ENCODE measurements at regions of chr5 and their contacts with region 1.

Region 1: GRCh38 chr5:128498844-128499455 is 39.1 kb downstream of the FBN2 start:
- DNase-seq: no peak
- ATAC-seq: no peak
- H3K4me3 ChIP-seq: no peak overlapping the region
- H3K27ac ChIP-seq: no peak overlapping the region
- H3K4me1 ChIP-seq: no peaks in the 10 kb centered on the region
- H3K27me3 ChIP-seq: no peaks in the 10 kb centered on the region

Region 2: GRCh38 chr5:128213340-128213739 is 285.6 kb before region 1 on chr5:
- intact Hi-C with region 1: loop called (anchors 2 to 5 kb)
- DNase-seq: peak in 1 of 3 donors; percentile 40
- ATAC-seq: peak in 1 of 2 donors; percentile 29
- H3K4me3 ChIP-seq: no peak overlapping the region
- H3K27ac ChIP-seq: no peak overlapping the region
- H3K4me1 ChIP-seq: no peaks in the 10 kb centered on the region
- H3K27me3 ChIP-seq: no peaks in the 10 kb centered on the region

Region 3: GRCh38 chr5:128228008-128228407 is 270.9 kb before region 1 on chr5:
- intact Hi-C with region 1: loop called in 1 of 4 experiments (anchors 5 kb)
- DNase-seq: no peak
- ATAC-seq: peak; percentile 16 to 92
- H3K4me3 ChIP-seq: no peak overlapping the region
- H3K27ac ChIP-seq: no peak overlapping the region
- H3K4me1 ChIP-seq: no peaks in the 10 kb centered on the region
- H3K27me3 ChIP-seq: no peaks in the 10 kb centered on the region